ENCODE measurements at regions of chr21 and their contacts with region 1.

Region 1: GRCh38 chr21:42145569-42146272 is 73.2 kb upstream of the ABCG1 start:
- DNase-seq: peak; percentile 54
- ATAC-seq: peak; percentile 96
- H3K4me3 ChIP-seq: no peak overlapping the region
- H3K27ac ChIP-seq: no peak overlapping the region
- H3K4me1 ChIP-seq: no peaks in the 10 kb centered on the region
- H3K27me3 ChIP-seq: peaks cover 34% of the 10 kb centered on the region
- CTCF ChIP-seq: peak; percentile 91
- POLR2A ChIP-seq: 0 out of 2 replicates have a peak, but pooled peaks have one; percentile 29
- RAD21 ChIP-seq: peak; percentile 93

Region 2: GRCh38 chr21:42227909-42228708 is 82.4 kb after region 1 on chr21:
- CTCF ChIA-PET with region 1: interaction called, 11 read pairs
- POLR2A ChIA-PET with region 1: no interaction called
- dilution Hi-C with region 1: no loop called
- in situ Hi-C with region 1: no loop called
- intact Hi-C with region 1: no loop called
- DNase-seq: peak; percentile 91
- ATAC-seq: peak; percentile 100
- H3K4me3 ChIP-seq: no peak overlapping the region
- H3K27ac ChIP-seq: peak overlapping the region; percentile 51; the same call in 1 of the 2 replicates
- H3K4me1 ChIP-seq: peaks cover 15% of the 10 kb centered on the region
- H3K27me3 ChIP-seq: no peaks in the 10 kb centered on the region
- CTCF ChIP-seq: no peak
- POLR2A ChIP-seq: no peak
- RAD21 ChIP-seq: no peak

Region 3: DNA sequence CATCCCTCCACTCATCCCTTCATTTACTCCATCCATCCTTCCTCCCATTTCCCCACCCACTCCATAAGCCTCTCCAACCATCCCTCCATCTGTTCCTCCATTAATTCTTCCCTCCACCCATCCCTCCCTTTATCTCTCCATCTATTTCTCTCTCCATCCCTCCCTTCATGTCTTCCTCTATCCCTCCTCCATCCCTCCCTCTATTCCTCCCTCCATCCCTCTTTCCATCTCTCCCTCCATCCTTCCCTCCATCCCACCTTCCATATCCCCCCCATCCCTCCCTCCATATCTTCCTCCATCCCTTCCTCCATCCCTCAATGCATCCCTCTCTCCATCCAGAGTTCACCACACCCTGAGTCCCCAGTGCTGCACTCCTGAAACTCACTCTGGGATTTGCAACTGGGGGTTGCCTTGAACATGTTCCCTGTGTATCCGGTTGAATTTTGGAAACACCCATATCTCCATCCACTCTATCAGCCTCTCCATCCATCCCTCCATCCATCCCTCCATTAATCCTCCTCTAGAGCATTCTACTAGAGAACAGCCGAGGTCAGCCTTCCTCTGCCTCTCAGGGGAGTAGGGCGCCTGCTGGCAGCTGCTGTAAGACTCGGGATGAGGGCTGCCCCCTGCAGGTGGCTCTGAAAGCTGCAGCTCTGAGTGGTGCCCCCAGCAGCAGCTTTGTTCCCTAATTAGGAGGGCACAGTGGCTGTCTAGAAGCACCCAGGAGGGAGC is 112.6 kb after region 1 on chr21:
- CTCF ChIA-PET with region 1: interaction called, 16 read pairs
- POLR2A ChIA-PET with region 1: no interaction called
- dilution Hi-C with region 1: no loop called
- in situ Hi-C with region 1: no loop called
- intact Hi-C with region 1: loop called (anchors 1 kb)
- DNase-seq: peak; percentile 32
- ATAC-seq: peak; percentile 66
- H3K4me3 ChIP-seq: no peak overlapping the region
- H3K27ac ChIP-seq: no peak overlapping the region
- H3K4me1 ChIP-seq: peaks cover 21% of the 10 kb centered on the region; the same call in 1 of the 2 replicates
- H3K27me3 ChIP-seq: peaks cover 20% of the 10 kb centered on the region; the same call in 1 of the 2 replicates
- CTCF ChIP-seq: peak; percentile 59
- POLR2A ChIP-seq: no peak
- RAD21 ChIP-seq: peak; percentile 58

Region 4: GRCh38 chr21:42337830-42338728 is 192.4 kb after region 1 on chr21:
- CTCF ChIA-PET with region 1: no interaction called
- POLR2A ChIA-PET with region 1: no interaction called
- dilution Hi-C with region 1: no loop called
- in situ Hi-C with region 1: no loop called
- intact Hi-C with region 1: loop called (anchors 1 kb)
- DNase-seq: peak; percentile 35
- ATAC-seq: peak; percentile 84
- H3K4me3 ChIP-seq: no peak overlapping the region
- H3K27ac ChIP-seq: no peak overlapping the region
- H3K4me1 ChIP-seq: no peaks in the 10 kb centered on the region; the same call in 1 of the 2 replicates
- H3K27me3 ChIP-seq: peaks cover 14% of the 10 kb centered on the region
- CTCF ChIP-seq: peak; percentile 41
- POLR2A ChIP-seq: no peak
- RAD21 ChIP-seq: no peak

Region 5: GRCh38 chr21:42381334-42381984 is 235.7 kb after region 1 on chr21:
- CTCF ChIA-PET with region 1: no interaction called
- POLR2A ChIA-PET with region 1: no interaction called
- dilution Hi-C with region 1: no loop called
- in situ Hi-C with region 1: no loop called
- intact Hi-C with region 1: loop called (anchors 1 kb)
- DNase-seq: peak; percentile 46
- ATAC-seq: peak; percentile 86
- H3K4me3 ChIP-seq: no peak overlapping the region
- H3K27ac ChIP-seq: no peak overlapping the region
- H3K4me1 ChIP-seq: no peaks in the 10 kb centered on the region
- H3K27me3 ChIP-seq: peaks cover 26% of the 10 kb centered on the region
- CTCF ChIP-seq: peak; percentile 68
- POLR2A ChIP-seq: no peak
- RAD21 ChIP-seq: peak; percentile 39; the same call in 1 of the 2 replicates

Region 6: DNA sequence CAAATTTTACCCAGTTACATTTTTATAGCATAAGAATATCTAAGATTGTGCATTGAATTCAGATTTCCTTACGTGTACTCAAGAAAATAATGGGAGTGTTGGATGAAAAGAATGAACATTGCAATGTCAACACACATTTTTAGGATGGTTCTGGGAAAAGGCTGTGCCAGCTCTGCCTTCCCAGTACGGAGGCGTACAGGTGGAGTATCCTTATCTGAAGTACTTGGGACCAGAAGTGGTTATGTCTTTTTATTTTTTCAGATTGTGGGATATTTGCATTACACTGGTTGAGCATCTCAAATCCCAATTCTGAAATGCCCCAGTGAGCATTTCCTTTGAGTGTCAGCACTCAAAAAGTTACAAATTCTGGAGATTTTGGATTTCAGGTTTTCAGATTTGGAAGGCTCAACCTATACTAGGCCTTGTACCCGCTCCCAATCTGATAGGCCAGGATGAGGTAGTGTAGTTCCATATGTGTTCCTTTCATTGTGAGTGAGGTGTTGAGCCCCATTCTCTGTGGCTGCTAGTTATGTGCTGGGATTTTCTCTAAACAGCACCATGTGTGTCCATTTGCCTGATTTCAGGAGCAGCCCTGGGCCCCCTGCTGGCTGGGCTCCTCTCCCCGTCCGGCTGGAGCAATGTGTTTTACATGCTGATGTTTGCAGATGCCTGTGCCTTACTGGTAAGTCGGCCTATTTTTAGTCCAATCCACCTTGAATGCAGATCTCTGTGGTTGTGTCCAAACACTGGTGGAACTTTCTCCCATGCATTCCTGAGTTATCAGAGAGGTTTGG is 428.7 kb after region 1 on chr21:
- CTCF ChIA-PET with region 1: no interaction called
- POLR2A ChIA-PET with region 1: no interaction called
- dilution Hi-C with region 1: no loop called
- in situ Hi-C with region 1: loop called (anchors 10 kb)
- intact Hi-C with region 1: loop called (anchors 10 kb)
- DNase-seq: peak; percentile 13
- ATAC-seq: peak; percentile 56; the same call in 1 of the 2 replicates
- H3K4me3 ChIP-seq: no peak overlapping the region
- H3K27ac ChIP-seq: no peak overlapping the region
- H3K4me1 ChIP-seq: no peaks in the 10 kb centered on the region
- H3K27me3 ChIP-seq: peaks cover 13% of the 10 kb centered on the region; the same call in 1 of the 2 replicates
- CTCF ChIP-seq: peak; percentile 24; the same call in 1 of the 2 replicates
- POLR2A ChIP-seq: no peak
- RAD21 ChIP-seq: no peak

Region 7: GRCh38 chr21:42818328-42818749 is 672.6 kb after region 1 on chr21:
- CTCF ChIA-PET with region 1: no interaction called
- POLR2A ChIA-PET with region 1: no interaction called
- dilution Hi-C with region 1: no loop called
- in situ Hi-C with region 1: no loop called
- intact Hi-C with region 1: loop called (anchors 10 kb)
- DNase-seq: peak; percentile 39
- ATAC-seq: peak; percentile 89
- H3K4me3 ChIP-seq: no peak overlapping the region
- H3K27ac ChIP-seq: no peak overlapping the region
- H3K4me1 ChIP-seq: no peaks in the 10 kb centered on the region
- H3K27me3 ChIP-seq: no peaks in the 10 kb centered on the region; the same call in 1 of the 2 replicates
- CTCF ChIP-seq: peak; percentile 74
- POLR2A ChIP-seq: no peak
- RAD21 ChIP-seq: peak; percentile 71